Endothelial cell of umbilical vein (primary cell): ENCODE measurements at regions of chr6 and their contacts with region 1.

Region 1: DNA sequence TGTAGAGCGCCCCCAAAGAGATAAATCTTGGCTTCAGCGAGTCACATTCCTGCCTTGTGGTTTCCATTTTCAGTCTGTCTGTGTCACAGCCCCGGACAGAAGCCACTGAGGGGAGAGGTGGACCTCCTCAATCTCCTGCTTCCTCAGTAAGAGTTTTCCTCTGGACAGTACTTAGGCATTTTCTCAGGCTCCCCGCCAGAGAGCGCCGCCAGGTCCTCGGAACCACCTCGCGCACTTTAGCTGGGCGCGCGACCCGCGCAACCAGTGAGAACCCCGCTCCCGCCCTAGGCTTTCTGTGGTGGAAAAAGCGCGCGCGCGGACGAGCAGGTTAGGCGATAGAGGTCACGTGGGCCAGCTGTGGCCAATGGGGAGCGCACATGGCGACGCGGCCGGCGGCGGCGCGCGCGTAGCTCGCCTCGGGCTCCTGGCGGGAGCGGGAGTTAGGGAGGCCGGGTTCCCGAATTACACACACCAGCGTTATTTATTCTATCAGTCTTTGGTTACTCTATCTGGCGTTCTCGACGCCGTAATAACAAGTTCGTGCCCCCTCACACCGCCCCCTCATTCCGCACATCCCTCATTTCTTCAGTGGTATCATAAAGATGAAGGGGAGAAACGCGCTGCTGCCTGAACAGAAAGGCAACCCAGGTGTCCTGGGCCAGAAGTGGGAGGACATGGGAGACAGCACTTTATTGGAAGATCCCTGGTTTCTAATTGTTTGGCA is 19.4 kb downstream of the PXT1 start:
- DNase-seq: peak; percentile 98
- H3K4me3 ChIP-seq: peak overlapping the region; percentile 52 to 75 (median 63)
- H3K27ac ChIP-seq: peak overlapping the region; percentile 54
- H3K4me1 ChIP-seq: peaks cover 12% of the 10 kb centered on the region
- H3K27me3 ChIP-seq: no peaks in the 10 kb centered on the region
- CTCF ChIP-seq: peak; percentile 59 to 74
- POLR2A ChIP-seq: peak; percentile 78

Region 2: GRCh38 chr6:36094238-36094637 is 329.0 kb before region 1 on chr6:
- CTCF ChIA-PET with region 1: no interaction called
- POLR2A ChIA-PET with region 1: no interaction called
- dilution Hi-C with region 1: no loop called
- intact Hi-C with region 1: no loop called
- DNase-seq: no peak
- H3K4me3 ChIP-seq: no peak overlapping the region
- H3K27ac ChIP-seq: no peak overlapping the region
- H3K4me1 ChIP-seq: peaks cover 1% of the 10 kb centered on the region
- H3K27me3 ChIP-seq: no peaks in the 10 kb centered on the region
- CTCF ChIP-seq: no peak
- POLR2A ChIP-seq: no peak

Region 3: GRCh38 chr6:36386495-36387439 is 36.5 kb before region 1 on chr6:
- CTCF ChIA-PET with region 1: interaction called, 3 read pairs
- POLR2A ChIA-PET with region 1: no interaction called
- dilution Hi-C with region 1: no loop called
- intact Hi-C with region 1: loop called (anchors 1 kb)
- DNase-seq: peak; percentile 74
- H3K4me3 ChIP-seq: peak overlapping the region; percentile 42 to 66 (median 61)
- H3K27ac ChIP-seq: peak overlapping the region; percentile 10
- H3K4me1 ChIP-seq: peaks cover 13% of the 10 kb centered on the region
- H3K27me3 ChIP-seq: peaks cover 18 to 21% of the 10 kb centered on the region in 2 experiments
- CTCF ChIP-seq: peak in 1 of 2 donors; percentile 22
- POLR2A ChIP-seq: no peak

Region 4: GRCh38 chr6:36546920-36547645 is 123.8 kb after region 1 on chr6 and contains the start of gene STK38:
- CTCF ChIA-PET with region 1: interaction called, 5 read pairs
- POLR2A ChIA-PET with region 1: no interaction called
- dilution Hi-C with region 1: no loop called
- intact Hi-C with region 1: loop called (anchors 1 kb)
- DNase-seq: peak; percentile 92
- H3K4me3 ChIP-seq: peak within 1 kb of the TSS; percentile 64 to 92 (median 72)
- H3K27ac ChIP-seq: peak within 1 kb of the TSS; percentile 88
- H3K4me1 ChIP-seq: peaks cover 22% of the 10 kb centered on the region
- H3K27me3 ChIP-seq: peaks cover 3 to 5% of the 10 kb centered on the region in 2 experiments
- CTCF ChIP-seq: peak in 1 of 2 donors; percentile 2
- POLR2A ChIP-seq: peak; percentile 99
- total RNA-seq, gene STK38: 26.9 and 30.3 TPM in 2 replicates

Region 5: GRCh38 chr6:36615018-36615761 is 191.9 kb after region 1 on chr6:
- CTCF ChIA-PET with region 1: interaction called, 3 read pairs
- POLR2A ChIA-PET with region 1: no interaction called
- dilution Hi-C with region 1: no loop called
- intact Hi-C with region 1: loop called (anchors 1 kb)
- DNase-seq: peak; percentile 85
- H3K4me3 ChIP-seq: no peak overlapping the region
- H3K27ac ChIP-seq: no peak overlapping the region
- H3K4me1 ChIP-seq: peaks cover 17% of the 10 kb centered on the region
- H3K27me3 ChIP-seq: no peaks in the 10 kb centered on the region
- CTCF ChIP-seq: peak; percentile 65 to 74
- POLR2A ChIP-seq: no peak

Region 6: DNA sequence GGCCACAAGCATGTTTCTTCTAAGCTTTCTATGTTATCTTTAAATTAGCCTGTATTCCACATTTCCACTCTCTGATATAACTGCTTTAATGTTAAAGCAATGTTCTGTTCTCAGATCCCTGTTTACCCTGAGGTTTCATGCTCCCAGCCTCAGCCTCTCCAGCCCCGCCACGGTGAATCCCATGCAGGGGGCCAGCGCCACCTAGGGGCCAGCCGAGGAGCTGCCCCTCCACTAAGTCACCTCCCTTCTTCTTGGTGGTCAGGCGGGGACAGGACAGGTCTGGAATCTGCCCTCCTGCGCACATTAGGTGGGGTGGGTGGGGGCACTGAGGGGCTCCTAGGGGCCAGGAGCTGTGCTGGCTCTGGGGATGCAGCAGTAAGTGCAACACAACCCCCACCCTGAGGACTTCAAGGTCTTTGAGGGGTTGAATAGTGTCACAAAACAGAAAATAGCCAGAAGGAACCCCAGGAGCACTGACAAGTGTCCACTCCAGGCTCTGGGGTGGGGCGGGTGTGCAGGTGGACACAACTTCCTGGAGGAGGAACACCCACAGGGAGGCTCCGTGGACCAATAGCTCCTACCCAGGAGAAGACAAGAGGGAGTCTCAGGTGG is 336.0 kb after region 1 on chr6:
- CTCF ChIA-PET with region 1: no interaction called
- POLR2A ChIA-PET with region 1: no interaction called
- dilution Hi-C with region 1: no loop called
- intact Hi-C with region 1: loop called (anchors 1 kb)
- DNase-seq: peak; percentile 85
- H3K4me3 ChIP-seq: no peak overlapping the region
- H3K27ac ChIP-seq: no peak overlapping the region
- H3K4me1 ChIP-seq: peaks cover 33% of the 10 kb centered on the region
- H3K27me3 ChIP-seq: no peaks in the 10 kb centered on the region
- CTCF ChIP-seq: peak; percentile 91 to 97
- POLR2A ChIP-seq: no peak